Posterior cingulate gyrus (tissue), 11 donors: ENCODE measurements at regions of chr3 and their contacts with region 1.

Region 1: GRCh38 chr3:184320099-184320445 is 5.7 kb downstream of the EIF4G1 start:
- DNase-seq: peak; percentile 91 to 99 (median 96)

Region 2: DNA sequence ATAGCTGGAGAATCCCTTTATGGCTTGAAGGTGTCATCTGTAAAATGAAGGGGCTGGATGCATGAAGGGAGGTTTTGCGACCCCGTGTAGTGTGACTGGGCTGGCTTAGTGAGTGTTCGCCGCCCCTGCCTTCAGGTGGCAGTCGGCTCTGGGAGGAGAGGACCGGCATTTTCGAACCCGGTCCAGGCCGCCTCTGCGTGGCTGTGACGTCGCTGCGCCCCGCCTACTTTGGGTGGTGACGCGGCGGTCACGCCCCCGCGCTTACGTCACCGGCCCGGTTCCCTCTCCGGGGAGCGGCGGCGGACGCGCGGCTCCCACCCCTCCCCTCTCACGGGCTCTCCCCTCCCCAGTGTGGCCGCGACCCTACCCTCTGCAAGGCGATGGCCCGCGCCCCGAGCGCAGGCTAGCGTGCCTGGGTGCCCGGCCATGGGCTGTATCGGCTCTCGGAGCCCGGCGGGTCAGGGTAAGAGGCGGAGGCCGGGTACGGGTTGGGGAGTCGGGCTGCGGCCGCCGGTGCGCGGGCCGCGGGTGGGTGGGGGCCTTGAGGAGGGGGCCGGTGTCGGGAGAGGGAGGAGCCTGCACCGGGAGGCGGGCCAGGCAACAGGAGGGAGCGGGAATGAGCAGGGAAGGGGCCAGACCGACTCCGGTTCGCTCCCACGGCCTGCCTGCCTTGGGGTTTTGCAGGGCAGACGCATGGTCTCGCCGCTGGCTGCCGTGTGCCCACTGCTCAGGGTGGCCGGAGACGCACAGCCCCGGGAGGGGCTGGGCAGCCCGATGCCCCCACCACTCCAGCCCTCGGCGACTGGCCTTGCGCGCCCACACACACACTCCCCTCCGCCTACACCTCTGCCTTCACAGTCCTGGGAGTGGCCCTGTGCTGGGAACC is 15.8 kb after region 1 on chr3:
- intact Hi-C with region 1: loop called (anchors 2 kb)
- DNase-seq: peak; percentile 87 to 99 (median 92)